Endothelial cell of umbilical vein (primary cell): ENCODE measurements at regions of chr5 and their contacts with region 1.

Region 1: GRCh38 chr5:177022384-177023308 is at the start of gene ZNF346:
- DNase-seq: peak; percentile 88
- H3K4me3 ChIP-seq: peak within 1 kb of the TSS; percentile 57 to 94 (median 87)
- H3K27ac ChIP-seq: peak within 1 kb of the TSS; percentile 51
- H3K4me1 ChIP-seq: peaks cover 9% of the 10 kb centered on the region
- H3K27me3 ChIP-seq: no peaks in the 10 kb centered on the region
- CTCF ChIP-seq: peak; percentile 23 to 58
- POLR2A ChIP-seq: peak; percentile 92
- total RNA-seq, gene ZNF346: 28.6 and 35.2 TPM in 2 replicates

Region 2: DNA sequence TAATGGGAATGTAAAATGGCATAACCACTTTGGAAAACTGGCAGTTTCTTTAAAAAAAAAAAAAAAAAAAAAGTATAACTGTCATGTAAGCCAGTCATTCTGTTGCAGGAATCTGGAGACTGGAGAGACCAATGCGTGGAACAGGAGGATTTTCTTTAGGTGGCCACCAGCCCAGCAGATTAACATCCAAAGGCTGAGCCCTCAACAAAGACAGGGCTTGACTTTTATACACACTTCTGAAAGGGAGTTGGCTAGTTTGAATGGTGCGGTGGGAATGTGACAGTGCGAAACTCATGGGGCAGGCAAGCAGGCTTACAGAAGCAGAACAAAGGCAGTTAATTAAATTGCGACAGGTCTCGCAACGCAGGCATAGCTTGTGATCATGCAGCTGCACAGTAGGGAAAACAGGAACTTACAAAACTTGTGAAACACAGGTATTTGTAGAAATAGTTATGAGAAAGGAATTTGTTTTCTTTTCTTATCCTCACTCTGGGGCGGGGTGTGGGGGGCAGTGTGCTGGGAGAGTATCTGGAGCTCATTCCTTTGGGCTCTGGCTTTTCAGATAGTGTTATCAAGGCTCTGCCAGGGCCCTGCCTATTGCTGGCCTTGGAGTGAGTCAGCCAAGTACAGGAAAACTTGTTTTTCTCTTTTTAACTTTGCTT is 28.1 kb before region 1 on chr5:
- CTCF ChIA-PET with region 1: interaction called, 3 read pairs
- POLR2A ChIA-PET with region 1: no interaction called
- dilution Hi-C with region 1: no loop called
- intact Hi-C with region 1: loop called (anchors 1 kb)
- DNase-seq: peak; percentile 98
- H3K4me3 ChIP-seq: no peak overlapping the region
- H3K27ac ChIP-seq: peak overlapping the region; percentile 92
- H3K4me1 ChIP-seq: peaks cover 37% of the 10 kb centered on the region
- H3K27me3 ChIP-seq: no peaks in the 10 kb centered on the region
- CTCF ChIP-seq: no peak
- POLR2A ChIP-seq: peak; percentile 69